Cardiac septum (tissue), 1 donor: ENCODE measurements at regions of chr3 and their contacts with region 1.

Region 1: GRCh38 chr3:13282986-13283876 is 136.9 kb downstream of the NUP210 start:
- DNase-seq: no peak

Region 2: DNA sequence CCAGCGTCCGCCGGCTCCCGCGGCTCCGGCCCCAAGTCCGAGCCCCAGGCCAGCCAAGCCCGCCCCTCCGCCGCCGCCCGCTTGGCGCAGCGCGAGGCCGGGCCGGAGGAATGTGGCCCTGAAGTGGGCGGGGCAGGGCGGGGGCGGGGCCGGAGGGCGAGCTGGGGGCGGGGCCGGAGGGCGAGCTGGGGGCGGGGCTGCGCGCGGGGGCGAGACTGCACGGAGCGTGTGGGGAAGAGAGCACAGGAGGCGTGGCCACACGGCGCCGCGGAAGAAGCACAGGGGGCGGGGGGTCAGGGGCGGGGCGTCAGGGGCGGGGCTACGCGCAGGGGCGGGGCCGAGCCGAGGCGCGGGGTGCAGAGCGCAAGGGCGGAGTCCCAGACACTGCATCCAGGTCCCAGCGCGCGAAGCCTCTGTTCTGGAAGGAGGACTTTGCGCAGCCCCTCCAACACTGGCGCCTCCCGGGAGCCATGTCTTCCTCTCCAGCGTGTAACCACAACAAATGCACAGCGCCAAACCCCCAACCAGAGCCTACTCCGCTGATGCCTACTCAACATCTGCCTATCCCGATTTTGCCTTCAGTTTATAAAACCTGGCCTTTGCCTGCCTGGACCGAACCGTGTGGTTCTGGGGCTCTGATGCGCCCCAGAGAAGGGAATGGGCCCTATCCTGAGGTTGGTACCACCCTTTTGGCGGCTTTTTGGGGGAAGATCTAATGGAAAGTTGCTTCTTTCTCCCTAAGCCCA is 315.5 kb before region 1 on chr3:
- intact Hi-C with region 1: no loop called
- DNase-seq: peak; percentile 96

Region 3: DNA sequence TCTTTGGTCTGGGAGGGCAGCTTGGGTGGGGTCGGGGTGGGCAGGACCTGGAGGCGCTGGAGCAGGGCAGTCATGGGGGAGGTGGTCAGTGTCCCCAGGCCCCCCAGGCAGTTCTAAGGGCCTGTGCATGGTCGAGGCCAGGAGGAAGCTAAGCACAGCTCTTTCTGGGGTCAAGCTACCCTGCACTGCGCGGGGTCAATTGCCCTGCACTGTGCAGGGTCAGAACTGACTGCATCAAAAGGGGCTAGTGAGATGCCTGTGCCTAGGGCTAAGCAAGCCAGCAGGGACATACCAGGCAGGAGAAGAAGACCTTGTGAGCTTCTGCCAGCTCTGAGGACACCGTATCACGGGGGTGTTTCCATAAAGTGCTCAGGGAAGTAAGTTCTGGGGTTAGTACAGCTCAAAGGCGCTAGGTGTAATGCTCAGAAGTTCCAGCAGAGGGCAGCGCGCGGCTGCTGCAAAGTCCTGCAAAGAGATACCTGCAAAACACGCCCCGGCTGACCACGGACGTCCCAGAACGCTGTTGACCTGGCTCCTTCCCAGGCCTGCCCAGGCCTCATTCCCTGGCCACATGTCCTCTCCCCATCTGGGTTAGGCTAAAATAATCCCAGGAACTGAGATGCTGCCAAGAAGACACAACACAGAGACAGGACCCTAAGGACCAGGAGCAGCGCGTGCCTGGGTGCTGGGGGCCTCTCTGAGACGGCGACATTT is 191.2 kb before region 1 on chr3:
- intact Hi-C with region 1: loop called (anchors 5 kb)
- DNase-seq: peak; percentile 93